ENCODE measurements at regions of chr7 and their contacts with region 1.

Region 1: GRCh38 chr7:23373151-23374004 is 74.2 kb downstream of the MALSU1 start:
- DNase-seq: peak; percentile 80
- ATAC-seq: peak; percentile 84
- H3K4me3 Mint-ChIP-seq: peak overlapping the region; percentile 16
- H3K27ac Mint-ChIP-seq: peak overlapping the region; percentile 84
- H3K4me1 Mint-ChIP-seq: peaks cover 65% of the 10 kb centered on the region
- H3K27me3 Mint-ChIP-seq: peaks cover 10% of the 10 kb centered on the region

Region 2: GRCh38 chr7:23100697-23101096 is 272.7 kb before region 1 on chr7:
- CTCF ChIA-PET with region 1: no interaction called
- POLR2A ChIA-PET with region 1: no interaction called
- intact Hi-C with region 1: no loop called
- DNase-seq: no peak
- ATAC-seq: no peak
- H3K4me3 Mint-ChIP-seq: no peak overlapping the region
- H3K27ac Mint-ChIP-seq: no peak overlapping the region
- H3K4me1 Mint-ChIP-seq: no peaks in the 10 kb centered on the region
- H3K27me3 Mint-ChIP-seq: no peaks in the 10 kb centered on the region

Region 3: DNA sequence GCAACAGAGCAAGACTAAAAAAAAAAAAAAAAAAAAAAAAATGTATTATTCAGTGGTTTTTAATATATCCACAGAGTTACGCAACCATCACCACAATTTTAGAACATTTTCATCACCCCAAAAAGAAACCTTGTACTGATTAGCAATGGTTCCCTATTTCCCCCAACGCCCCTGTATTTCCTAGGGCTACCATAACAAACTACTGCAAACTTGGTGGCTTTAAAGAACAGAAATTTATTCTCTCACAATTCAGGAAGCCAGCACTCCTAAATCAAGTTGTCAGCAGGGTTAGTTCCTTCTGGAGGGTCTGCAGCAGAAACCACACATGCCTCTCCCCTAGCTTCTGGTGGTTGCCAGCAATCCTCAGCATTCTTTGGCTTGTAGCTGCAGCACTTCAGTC is 197.4 kb before region 1 on chr7:
- CTCF ChIA-PET with region 1: no interaction called
- POLR2A ChIA-PET with region 1: no interaction called
- intact Hi-C with region 1: no loop called
- DNase-seq: no peak
- ATAC-seq: no peak
- H3K4me3 Mint-ChIP-seq: no peak overlapping the region
- H3K27ac Mint-ChIP-seq: no peak overlapping the region
- H3K4me1 Mint-ChIP-seq: peaks cover 5% of the 10 kb centered on the region
- H3K27me3 Mint-ChIP-seq: no peaks in the 10 kb centered on the region

Region 4: GRCh38 chr7:23298885-23299769 is 74.3 kb before region 1 on chr7 and contains the start of gene MALSU1:
- CTCF ChIA-PET with region 1: no interaction called
- POLR2A ChIA-PET with region 1: no interaction called
- intact Hi-C with region 1: loop called in 1 of 2 experiments (anchors 2 kb)
- DNase-seq: peak; percentile 99
- ATAC-seq: peak; percentile 97
- H3K4me3 Mint-ChIP-seq: peak within 1 kb of the TSS; percentile 98
- H3K27ac Mint-ChIP-seq: peak within 1 kb of the TSS; percentile 97
- H3K4me1 Mint-ChIP-seq: peaks cover 38% of the 10 kb centered on the region
- H3K27me3 Mint-ChIP-seq: no peaks in the 10 kb centered on the region
- total RNA-seq, gene MALSU1: 97.7 to 98.4 TPM

Region 5: GRCh38 chr7:23306936-23307521 is 66.3 kb before region 1 on chr7:
- CTCF ChIA-PET with region 1: interaction called, 4 read pairs
- POLR2A ChIA-PET with region 1: no interaction called
- intact Hi-C with region 1: loop called in 1 of 2 experiments (anchors 1 kb)
- DNase-seq: no peak
- ATAC-seq: peak; percentile 85
- H3K4me3 Mint-ChIP-seq: no peak overlapping the region
- H3K27ac Mint-ChIP-seq: peak overlapping the region; percentile 56
- H3K4me1 Mint-ChIP-seq: peaks cover 47% of the 10 kb centered on the region
- H3K27me3 Mint-ChIP-seq: no peaks in the 10 kb centered on the region

Region 6: DNA sequence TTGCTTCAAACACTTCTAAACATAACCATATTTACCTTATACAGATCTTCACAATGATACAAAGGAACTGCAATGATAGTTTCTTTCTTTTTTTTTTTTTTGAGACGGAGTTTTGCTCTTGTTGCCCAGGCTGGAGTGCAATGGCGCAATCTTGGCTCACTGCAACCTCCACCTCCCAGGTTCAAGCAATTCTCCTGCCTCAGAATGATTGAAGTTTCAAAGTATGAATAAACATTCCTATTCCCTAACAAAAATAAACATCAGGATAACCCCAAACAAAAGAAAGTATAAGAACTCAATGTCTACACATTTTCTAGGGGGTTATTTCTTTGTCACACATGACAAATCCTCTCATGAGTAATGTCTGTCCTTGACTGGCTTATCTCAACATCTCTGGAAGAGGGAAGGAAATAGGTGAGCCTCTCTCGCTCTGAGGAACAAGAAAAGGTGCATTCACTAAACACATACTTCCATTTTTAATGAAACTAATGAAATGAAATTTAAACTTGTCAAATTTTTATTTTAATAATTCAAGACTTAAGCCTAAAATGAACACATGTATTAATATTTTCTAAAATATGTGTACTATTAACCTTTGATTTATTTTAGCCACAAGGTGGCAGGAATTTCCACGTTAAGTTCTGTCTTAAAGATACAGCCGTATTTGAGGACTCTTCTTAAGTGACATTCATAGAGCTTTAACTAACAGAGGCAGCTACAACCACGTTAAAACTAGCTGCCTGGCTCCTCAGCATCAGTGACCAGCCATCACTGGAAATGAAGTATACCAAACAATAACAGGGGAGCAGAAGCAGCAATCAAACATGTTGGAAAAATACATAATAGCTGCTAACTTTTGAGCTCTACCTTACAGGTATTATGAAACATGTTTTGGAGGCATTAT is 15.9 kb before region 1 on chr7:
- CTCF ChIA-PET with region 1: interaction called, 15 read pairs
- POLR2A ChIA-PET with region 1: no interaction called
- intact Hi-C with region 1: loop called (anchors 1 kb)
- DNase-seq: no peak
- ATAC-seq: peak; percentile 42
- H3K4me3 Mint-ChIP-seq: no peak overlapping the region
- H3K27ac Mint-ChIP-seq: no peak overlapping the region
- H3K4me1 Mint-ChIP-seq: peaks cover 18% of the 10 kb centered on the region
- H3K27me3 Mint-ChIP-seq: peaks cover 7% of the 10 kb centered on the region

Region 7: DNA sequence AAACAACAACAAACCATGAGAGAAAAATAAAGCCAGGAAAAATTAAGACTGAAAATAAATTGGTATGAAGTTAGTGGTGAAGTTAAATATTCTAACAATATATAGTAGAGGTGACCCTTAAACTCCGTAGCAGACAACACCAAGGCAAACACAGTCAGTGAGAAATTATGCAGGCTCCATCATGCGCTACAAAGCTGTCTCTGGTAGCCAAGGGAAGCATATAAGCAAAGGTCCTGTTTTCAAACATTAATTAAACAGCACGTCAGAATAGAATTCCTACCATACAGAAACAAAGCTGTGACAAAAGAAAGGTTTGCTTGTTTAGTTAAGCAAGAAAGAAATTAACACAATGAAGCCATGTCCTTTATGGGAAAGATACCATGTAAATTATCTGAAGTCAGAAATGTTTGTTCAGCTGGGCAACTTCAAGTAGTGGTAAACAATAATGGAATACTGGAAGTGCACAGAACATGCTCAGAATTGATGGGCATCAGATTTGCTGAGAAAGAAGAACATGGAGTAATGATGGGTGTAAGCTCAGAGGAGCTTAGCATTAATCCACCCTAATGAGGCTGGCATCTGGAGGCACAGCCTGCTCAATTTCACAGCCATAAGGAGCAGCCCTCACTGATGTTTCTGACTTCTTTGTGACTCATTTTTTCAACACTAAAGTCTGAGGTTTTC is 21.3 kb after region 1 on chr7:
- CTCF ChIA-PET with region 1: interaction called, 4 read pairs
- POLR2A ChIA-PET with region 1: interaction called, 3 read pairs
- intact Hi-C with region 1: loop called (anchors 1 kb)
- DNase-seq: no peak
- ATAC-seq: no peak
- H3K4me3 Mint-ChIP-seq: no peak overlapping the region
- H3K27ac Mint-ChIP-seq: no peak overlapping the region
- H3K4me1 Mint-ChIP-seq: peaks cover 28% of the 10 kb centered on the region
- H3K27me3 Mint-ChIP-seq: peaks cover 6% of the 10 kb centered on the region

Region 8: GRCh38 chr7:23404546-23405239 is 31.3 kb after region 1 on chr7:
- CTCF ChIA-PET with region 1: no interaction called
- POLR2A ChIA-PET with region 1: interaction called, 3 read pairs
- intact Hi-C with region 1: loop called (anchors 1 kb)
- DNase-seq: peak; percentile 46
- ATAC-seq: peak; percentile 90
- H3K4me3 Mint-ChIP-seq: no peak overlapping the region
- H3K27ac Mint-ChIP-seq: peak overlapping the region; percentile 85
- H3K4me1 Mint-ChIP-seq: peaks cover 28% of the 10 kb centered on the region
- H3K27me3 Mint-ChIP-seq: no peaks in the 10 kb centered on the region

Region 9: GRCh38 chr7:24757353-24758275 is 1384.2 kb after region 1 on chr7 and contains the start of gene GSDME:
- CTCF ChIA-PET with region 1: no interaction called
- POLR2A ChIA-PET with region 1: no interaction called
- intact Hi-C with region 1: loop called in 1 of 2 experiments (anchors 10 kb)
- DNase-seq: peak; percentile 62
- ATAC-seq: peak; percentile 52
- H3K4me3 Mint-ChIP-seq: peak within 1 kb of the TSS; percentile 78
- H3K27ac Mint-ChIP-seq: peak within 1 kb of the TSS; percentile 85
- H3K4me1 Mint-ChIP-seq: peaks cover 33% of the 10 kb centered on the region
- H3K27me3 Mint-ChIP-seq: peaks cover 39% of the 10 kb centered on the region
- total RNA-seq, gene GSDME: 6.2 to 8.5 TPM

Measured in activated CD4-positive, alpha-beta T cell treated with anti-CD3 and anti-CD28 coated beads for 36 hours (primary cell).